AG04449 (cell line): ENCODE measurements at regions of chr2 and their contacts with region 1.

Region 1: GRCh38 chr2:199973703-199974102 is 18.3 kb downstream of the MAIP1 start:
- DNase-seq: peak; percentile 14
- H3K4me3 ChIP-seq: no peak overlapping the region
- CTCF ChIP-seq: peak; percentile 41

Region 2: DNA sequence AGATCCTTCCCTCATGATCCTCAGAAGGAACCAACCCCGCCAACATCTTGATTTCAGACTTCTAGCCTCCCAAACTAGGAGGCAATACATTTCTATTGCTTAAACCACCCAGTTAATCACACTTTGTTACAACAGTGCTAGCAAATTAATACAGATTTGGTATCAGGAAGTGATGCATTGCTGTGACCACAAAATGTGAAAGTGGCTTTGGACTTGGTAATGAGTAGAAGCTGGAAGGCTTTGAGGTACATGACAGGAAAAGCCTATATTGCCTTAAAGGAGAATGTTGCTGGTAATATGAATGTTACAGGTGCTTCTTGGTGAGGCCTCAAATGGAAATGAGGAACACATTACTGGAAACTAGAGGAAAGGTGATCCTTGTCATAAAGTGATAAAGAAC is 776.3 kb before region 1 on chr2:
- CTCF ChIA-PET with region 1: no interaction called
- POLR2A ChIA-PET with region 1: no interaction called
- DNase-seq: no peak
- H3K4me3 ChIP-seq: no peak overlapping the region
- CTCF ChIP-seq: no peak

Region 3: DNA sequence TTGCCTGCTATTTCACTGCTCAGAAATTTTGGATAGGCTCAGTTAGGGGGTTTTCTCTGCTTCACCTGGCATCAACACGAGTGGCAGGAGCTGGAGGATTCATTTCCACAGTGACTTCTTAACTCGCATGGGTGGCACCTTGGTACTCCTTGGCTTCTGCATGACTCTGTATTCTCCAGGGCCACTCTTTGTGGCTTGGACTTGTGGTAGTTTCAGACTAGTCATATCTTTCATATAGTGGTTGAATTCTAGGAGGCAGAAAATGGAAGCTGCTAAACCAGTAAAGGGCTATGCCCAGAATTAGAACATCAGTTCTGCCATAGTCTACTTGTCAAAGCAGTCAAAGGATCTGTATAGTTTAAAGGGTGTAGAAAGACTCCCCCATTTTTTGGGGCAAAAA is 11.5 kb before region 1 on chr2:
- CTCF ChIA-PET with region 1: interaction called, 10 read pairs
- POLR2A ChIA-PET with region 1: no interaction called
- DNase-seq: no peak
- H3K4me3 ChIP-seq: no peak overlapping the region
- CTCF ChIP-seq: no peak

Region 4: DNA sequence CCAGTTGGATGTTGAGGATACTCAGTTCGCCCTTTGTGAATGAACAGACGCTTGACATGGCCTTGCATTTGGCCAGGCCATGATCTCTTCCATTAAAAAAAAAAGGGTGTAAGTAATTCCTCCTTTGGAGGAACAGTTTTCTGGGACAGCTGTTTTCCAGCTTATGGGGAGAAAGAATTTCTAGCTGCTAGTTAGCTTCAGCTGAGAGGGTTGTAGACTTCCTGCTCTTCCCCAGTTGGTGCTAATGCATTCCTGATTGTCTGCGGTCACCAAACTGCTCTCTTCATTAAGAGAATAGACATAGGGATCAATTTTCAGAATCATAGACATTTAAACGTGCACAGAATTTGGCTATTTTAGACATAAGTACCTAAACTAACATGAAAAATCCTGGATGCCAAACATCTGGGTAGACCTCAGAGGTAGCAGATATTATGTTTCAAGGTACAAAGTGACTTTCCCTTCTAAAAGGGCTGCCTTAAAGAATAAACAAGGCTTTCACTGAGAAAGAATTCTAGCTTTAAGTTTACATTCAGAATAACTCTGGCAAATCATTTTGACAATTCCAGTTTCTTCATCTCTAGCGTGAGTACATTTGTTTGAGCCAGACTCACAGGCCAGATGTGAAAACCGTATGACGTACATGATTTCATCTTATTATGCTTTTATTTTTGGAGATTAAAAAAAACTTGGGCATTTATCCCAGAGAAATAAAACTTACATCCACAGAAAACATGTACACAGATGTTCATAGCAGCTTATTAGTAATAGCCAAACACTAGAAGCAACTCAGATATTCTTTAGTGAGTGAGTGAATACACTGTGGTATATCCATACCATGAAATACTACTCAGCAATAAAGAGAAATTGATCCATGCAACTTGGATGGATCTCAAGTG is 52.9 kb after region 1 on chr2:
- CTCF ChIA-PET with region 1: no interaction called
- POLR2A ChIA-PET with region 1: no interaction called
- DNase-seq: no peak
- H3K4me3 ChIP-seq: no peak overlapping the region
- CTCF ChIP-seq: no peak

Region 5: GRCh38 chr2:200471324-200471848 is 497.7 kb after region 1 on chr2:
- CTCF ChIA-PET with region 1: interaction called, 242 read pairs
- POLR2A ChIA-PET with region 1: no interaction called
- DNase-seq: no peak
- H3K4me3 ChIP-seq: no peak overlapping the region
- CTCF ChIP-seq: peak; percentile 52

Region 6: DNA sequence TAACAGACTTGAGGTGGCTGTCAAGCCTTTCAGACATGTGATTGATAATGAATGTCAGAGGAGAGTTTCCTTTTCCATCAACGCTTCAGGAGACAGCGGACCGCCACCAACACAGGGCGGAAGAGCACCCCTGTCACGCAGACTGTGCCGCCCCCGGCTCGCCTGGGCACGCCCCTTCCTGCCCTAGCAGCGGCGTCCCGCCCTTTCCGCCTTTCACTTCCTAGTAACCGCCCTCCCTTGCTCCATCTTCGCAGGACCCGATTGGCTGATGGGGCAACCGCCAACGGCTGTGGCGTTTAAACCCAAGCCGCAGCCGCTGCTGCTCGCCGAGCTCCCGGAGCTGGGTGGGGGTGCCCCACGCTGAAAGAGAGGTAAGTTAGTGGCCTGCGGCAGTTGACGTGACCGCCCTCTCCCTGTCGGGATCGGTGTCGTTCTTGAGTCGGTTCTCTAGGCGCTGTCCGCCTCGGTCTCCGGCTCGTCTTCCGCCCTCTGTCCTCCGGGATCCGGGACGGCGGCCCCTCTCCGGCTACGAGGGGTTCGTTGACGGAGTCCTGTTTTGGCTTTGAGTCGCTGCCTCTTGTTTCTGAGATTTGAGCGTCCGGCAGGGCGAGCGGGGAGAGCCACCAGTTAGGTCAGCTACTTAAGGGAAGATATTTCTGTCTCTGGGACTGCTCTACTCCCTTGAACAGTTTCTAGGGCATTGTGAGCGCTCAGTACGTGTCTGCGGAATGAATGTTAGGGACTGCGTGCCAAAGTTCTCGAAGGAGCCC is 552.4 kb after region 1 on chr2 and contains the start of gene SGO2:
- CTCF ChIA-PET with region 1: interaction called, 15 read pairs
- POLR2A ChIA-PET with region 1: no interaction called
- DNase-seq: peak; percentile 52
- H3K4me3 ChIP-seq: peak within 1 kb of the TSS; percentile 97
- CTCF ChIP-seq: no peak

Region 7: DNA sequence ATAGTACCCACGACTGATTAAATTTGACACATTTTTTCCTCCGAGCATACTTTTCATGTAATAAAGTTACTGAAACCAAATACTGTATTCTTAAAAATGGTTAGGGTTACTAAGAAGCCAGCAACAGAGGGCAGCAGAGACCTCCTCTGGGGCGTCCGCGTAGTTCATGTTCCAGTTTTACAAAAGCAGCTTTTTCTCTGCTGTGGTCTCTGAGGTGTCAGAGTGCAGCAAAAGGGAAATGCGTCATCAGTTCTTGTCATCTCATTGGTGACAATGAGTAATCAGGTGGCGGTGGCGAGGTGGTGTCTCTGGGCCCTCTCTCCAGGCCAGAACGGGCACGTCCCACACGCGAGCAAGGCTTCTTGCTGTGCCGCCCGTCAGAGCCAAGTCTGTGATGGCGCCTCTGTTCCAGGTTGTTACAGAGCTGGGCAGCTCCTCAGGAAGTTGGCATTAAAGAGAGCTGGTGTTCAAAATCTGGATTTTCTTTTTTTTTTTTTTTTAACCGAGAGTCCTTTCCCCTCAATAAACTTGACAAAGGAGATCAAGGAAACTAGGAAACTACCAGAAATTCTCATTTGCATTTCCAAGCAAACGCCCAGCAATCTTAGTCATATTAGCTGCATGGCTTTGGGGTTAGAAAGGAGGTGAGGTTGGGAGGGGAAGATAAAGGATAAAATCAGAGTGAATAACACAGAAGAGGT is 739.5 kb after region 1 on chr2:
- CTCF ChIA-PET with region 1: interaction called, 17 read pairs
- POLR2A ChIA-PET with region 1: no interaction called
- DNase-seq: peak; percentile 82
- H3K4me3 ChIP-seq: peak overlapping the region; percentile 54
- CTCF ChIP-seq: peak; percentile 74